Activated T-helper 2 cell treated with anti-CD3 and anti-CD28 coated beads, Interferon-gamma antibody, Interleukin-2, Interleukin-4, amounts not matched to agents 10 μg/mL and 5 μg/mL and 100 μg/mL, durations not matched to agents 14 hours and 24 hours and 36 hours (primary cell): ENCODE measurements at regions of chr4 and their contacts with region 1.

Region 1: DNA sequence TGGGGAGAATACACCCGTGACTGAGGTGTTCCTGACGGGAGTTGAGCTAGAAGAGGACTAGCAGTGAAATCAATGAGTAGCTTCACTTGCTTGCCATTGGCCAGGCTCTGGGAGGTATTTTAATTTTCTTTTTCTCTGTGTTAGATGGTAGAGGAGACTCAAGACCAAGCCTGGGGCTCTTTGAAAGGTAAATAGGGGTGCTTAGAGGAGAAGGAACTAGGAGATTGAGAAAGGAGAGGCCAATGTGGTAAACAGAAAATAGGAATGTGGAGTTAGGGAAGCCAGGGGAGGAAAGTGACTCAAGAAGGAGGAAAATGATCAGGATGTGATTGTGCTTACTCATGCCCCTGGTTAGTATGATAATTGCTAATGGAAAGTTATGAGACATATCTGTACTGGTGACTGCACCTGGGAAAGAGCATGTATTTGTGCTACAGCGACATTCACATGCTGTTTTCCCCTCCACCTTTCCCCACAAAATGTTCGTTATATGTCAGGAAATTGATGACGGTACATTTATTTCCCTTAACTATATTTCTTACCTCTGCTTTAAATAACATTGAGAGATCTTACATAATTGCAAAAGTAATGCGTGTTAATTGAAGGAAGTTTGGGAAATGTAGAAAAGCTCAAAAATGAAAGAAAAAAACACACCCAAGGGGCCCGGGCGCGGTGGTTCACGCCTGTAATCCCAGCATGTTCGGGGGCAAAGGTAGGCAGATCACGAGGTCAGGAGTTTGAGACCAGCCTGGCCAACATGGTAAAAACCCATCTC is 16.9 kb upstream of the LRBA start:
- DNase-seq: no peak
- H3K4me3 Mint-ChIP-seq: peak overlapping the region; percentile 65
- H3K27ac Mint-ChIP-seq: peak overlapping the region; percentile 81
- H3K4me1 Mint-ChIP-seq: peaks cover 26% of the 10 kb centered on the region
- H3K27me3 Mint-ChIP-seq: no peaks in the 10 kb centered on the region

Region 2: DNA sequence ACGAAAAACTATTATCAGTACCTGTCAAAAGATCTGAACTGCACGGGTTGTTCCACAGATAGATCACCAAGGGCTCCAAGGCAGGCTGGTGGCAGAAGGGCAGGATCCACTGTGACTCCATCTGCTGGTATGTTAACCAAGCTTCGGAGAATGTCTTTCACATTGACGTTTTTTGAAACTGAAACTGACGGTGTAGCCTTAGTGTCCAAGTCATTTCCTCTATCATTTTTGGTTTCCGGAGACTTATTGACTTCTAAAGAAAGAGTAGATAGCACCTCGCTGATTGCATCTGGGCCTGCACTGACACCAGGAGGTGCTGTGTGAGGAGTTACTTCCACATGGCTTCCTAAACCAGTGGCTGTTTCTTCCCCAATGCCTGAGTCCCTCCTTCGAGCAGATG is 203.9 kb before region 1 on chr4:
- intact Hi-C with region 1: loop called (anchors 5 kb)
- DNase-seq: peak; percentile 40
- H3K4me3 Mint-ChIP-seq: peak overlapping the region; percentile 10
- H3K27ac Mint-ChIP-seq: peak overlapping the region; percentile 78
- H3K4me1 Mint-ChIP-seq: peaks cover 26% of the 10 kb centered on the region
- H3K27me3 Mint-ChIP-seq: no peaks in the 10 kb centered on the region

Region 3: DNA sequence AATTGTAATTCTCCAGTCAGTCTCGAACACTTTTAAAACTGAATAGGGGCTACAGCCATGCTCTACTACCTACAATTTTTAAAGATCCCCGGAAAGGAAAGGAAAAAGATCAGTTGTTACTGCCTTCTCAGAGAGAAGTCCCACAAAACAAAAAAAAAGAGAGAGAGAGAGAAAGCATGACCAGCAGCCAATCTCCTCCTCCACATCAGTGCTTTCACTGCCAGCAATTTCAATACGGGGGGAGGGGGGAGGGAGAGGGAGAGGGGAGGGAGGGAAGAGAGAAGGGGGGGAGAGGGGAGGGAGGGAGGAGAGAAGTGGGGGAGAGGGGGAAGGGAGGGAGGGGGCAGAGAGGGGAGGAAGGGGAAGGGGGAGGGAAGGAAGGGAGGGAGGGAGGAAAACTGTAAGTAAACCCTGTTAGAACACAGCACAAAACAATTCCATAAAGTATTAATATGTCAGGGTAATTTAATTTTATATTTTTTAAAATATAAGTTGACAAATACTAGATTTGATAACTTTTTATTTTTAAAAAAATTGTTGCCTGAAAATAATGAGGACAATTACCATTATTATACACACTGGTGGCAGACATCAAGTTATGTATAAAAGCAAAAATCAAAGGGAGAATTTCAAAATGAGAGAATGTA is 124.9 kb before region 1 on chr4:
- intact Hi-C with region 1: no loop called
- DNase-seq: no peak
- H3K4me3 Mint-ChIP-seq: no peak overlapping the region
- H3K27ac Mint-ChIP-seq: no peak overlapping the region
- H3K4me1 Mint-ChIP-seq: peaks cover 20% of the 10 kb centered on the region
- H3K27me3 Mint-ChIP-seq: no peaks in the 10 kb centered on the region

Region 4: GRCh38 chr4:150970685-150971151 is 61.3 kb before region 1 on chr4:
- intact Hi-C with region 1: loop called (anchors 5 kb)
- DNase-seq: no peak
- H3K4me3 Mint-ChIP-seq: no peak overlapping the region
- H3K27ac Mint-ChIP-seq: peak overlapping the region; percentile 68
- H3K4me1 Mint-ChIP-seq: peaks cover 40% of the 10 kb centered on the region
- H3K27me3 Mint-ChIP-seq: no peaks in the 10 kb centered on the region

Region 5: GRCh38 chr4:151015459-151016347 is 16.3 kb before region 1 on chr4:
- intact Hi-C with region 1: loop called (anchors 1 kb)
- DNase-seq: peak; percentile 76
- H3K4me3 Mint-ChIP-seq: peak overlapping the region; percentile 100
- H3K27ac Mint-ChIP-seq: peak overlapping the region; percentile 99
- H3K4me1 Mint-ChIP-seq: peaks cover 16% of the 10 kb centered on the region
- H3K27me3 Mint-ChIP-seq: no peaks in the 10 kb centered on the region

Region 6: GRCh38 chr4:151074416-151074916 is 42.4 kb after region 1 on chr4:
- intact Hi-C with region 1: no loop called
- DNase-seq: no peak
- H3K4me3 Mint-ChIP-seq: no peak overlapping the region
- H3K27ac Mint-ChIP-seq: no peak overlapping the region
- H3K4me1 Mint-ChIP-seq: no peaks in the 10 kb centered on the region
- H3K27me3 Mint-ChIP-seq: no peaks in the 10 kb centered on the region

Region 7: DNA sequence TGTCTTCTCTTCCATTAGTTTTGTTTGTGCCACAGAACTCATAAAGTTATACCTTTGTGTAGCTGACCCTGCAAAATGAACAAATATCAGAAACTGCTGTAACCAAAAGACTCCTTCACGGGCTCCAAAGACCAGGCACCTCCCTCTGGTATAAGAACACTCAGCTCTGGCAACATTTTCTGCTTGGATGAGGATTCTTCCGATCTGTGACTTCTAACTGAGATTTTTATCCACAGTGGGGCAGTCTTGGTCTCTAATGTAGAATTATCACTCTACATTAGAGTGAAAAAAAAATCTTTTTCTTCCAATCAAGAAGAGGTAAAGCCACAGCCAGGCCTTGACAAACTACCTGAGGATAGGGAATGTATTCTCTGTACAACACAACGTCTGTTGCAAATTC is 206.5 kb after region 1 on chr4:
- intact Hi-C with region 1: no loop called
- DNase-seq: no peak
- H3K4me3 Mint-ChIP-seq: no peak overlapping the region
- H3K27ac Mint-ChIP-seq: no peak overlapping the region
- H3K4me1 Mint-ChIP-seq: no peaks in the 10 kb centered on the region
- H3K27me3 Mint-ChIP-seq: peaks cover 7% of the 10 kb centered on the region